Ascending aorta (tissue), 2 donors: ENCODE measurements at regions of chr6 and their contacts with region 1.

Region 1: DNA sequence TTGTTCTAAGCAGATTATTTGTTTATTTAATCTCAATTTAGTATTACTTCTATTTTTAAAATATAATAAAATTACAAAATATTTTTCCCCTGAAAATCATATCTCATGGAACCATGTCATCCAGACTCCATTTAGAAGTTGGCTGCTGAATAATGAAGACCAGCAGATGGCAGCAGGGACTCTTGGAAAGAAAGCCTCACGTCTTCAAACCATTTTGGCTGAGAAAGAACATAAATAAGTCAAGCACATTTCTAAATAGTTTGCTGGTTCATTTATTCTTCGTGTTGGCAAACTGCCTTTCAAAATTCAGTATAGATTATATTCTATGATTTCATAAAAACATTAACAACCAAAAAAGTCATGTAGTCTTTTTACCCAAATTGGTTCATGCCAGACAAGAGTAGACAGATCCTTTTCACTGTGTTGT is 71.7 kb downstream of the RCAN2 start:
- DNase-seq: peak in 1 of 2 donors; percentile 81
- H3K4me3 ChIP-seq: no peak overlapping the region
- H3K27ac ChIP-seq: peak overlapping the region; percentile 68 to 72
- H3K4me1 ChIP-seq: peaks cover 17 to 32% of the 10 kb centered on the region in 2 donors
- H3K27me3 ChIP-seq: no peaks in the 10 kb centered on the region
- CTCF ChIP-seq: peak; percentile 69 to 86 (median 85)

Region 2: DNA sequence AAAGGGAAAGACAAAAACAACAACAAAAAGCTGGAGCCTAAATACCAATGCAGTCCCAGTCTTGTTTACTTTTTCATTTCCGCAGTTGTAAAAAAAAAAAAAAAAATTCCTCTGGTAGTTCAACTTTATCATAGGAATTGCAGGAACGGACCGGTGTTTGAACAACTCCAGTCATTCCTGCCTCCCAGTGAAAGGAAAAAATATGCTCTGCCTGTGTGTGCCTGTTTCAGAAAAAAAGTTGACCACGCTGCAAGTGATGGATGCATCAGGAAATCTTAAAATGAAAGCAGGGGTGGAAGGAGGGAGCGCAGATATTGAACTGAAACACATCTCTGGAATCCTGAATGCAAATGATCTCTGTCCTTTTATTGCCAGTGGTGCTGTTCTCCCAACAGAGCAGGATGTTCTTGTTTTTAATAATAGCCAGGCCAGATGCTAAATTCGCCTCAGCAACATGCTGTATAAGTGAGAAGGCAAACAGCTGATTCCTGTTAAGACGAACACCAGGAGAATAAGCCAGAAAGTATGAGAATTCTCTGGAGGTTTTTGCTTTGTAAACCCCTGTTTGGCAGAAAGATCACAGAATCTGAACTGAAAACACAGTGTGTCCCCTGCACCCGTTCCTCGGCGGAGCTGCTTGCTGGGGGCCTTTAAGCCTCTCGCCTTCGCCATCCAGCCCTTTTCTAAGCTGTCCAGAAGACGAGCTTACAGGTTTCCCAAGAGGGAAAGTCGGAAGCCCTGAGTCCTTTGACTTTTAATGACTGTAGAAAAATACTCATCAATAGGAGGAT is 863.4 kb before region 1 on chr6:
- intact Hi-C with region 1: no loop called
- DNase-seq: no peak
- H3K4me3 ChIP-seq: peak overlapping the region in 1 of 2 donors; percentile 36
- H3K27ac ChIP-seq: no peak overlapping the region
- H3K4me1 ChIP-seq: no peaks in the 10 kb centered on the region
- H3K27me3 ChIP-seq: no peaks in the 10 kb centered on the region
- CTCF ChIP-seq: no peak

Region 3: DNA sequence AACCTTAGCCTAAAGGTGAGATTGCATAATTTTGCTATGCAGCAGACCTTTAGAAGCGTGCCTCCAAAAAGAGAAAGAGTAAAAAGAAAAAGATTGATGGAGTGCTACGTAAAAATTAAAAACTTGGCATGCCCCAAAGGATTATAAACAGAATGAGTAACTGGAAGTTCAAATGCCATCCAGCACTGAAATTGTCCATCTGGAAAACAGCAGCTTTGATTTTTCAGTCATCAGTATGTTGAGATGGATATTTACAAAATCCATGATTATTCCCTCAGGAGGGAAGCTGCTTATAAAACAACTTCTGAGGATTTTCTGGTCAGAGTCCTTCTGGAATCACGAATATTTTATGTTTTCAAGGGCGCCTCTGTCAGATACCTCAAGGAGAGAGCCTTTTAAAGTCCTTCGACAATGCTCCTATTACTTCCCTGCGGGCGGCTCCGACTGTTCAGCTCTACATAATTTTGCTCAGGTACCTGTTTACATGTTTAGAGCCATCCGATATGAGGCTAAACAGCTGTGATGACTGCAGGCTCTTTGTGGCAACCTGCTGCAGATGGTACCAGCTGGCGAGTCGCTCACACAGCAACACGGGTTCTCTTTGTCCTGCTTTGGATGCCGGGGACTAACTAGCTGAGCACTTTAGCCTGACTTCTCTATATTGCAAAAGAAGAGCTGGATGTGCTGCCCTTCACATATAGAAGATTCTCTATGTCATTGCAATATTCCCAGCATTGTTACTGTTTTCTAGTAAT is 11.6 kb before region 1 on chr6:
- intact Hi-C with region 1: no loop called
- DNase-seq: no peak
- H3K4me3 ChIP-seq: no peak overlapping the region
- H3K27ac ChIP-seq: peak overlapping the region in 1 of 2 donors; percentile 28
- H3K4me1 ChIP-seq: peaks cover 6 to 53% of the 10 kb centered on the region in 2 donors
- H3K27me3 ChIP-seq: no peaks in the 10 kb centered on the region
- CTCF ChIP-seq: no peak

Region 4: DNA sequence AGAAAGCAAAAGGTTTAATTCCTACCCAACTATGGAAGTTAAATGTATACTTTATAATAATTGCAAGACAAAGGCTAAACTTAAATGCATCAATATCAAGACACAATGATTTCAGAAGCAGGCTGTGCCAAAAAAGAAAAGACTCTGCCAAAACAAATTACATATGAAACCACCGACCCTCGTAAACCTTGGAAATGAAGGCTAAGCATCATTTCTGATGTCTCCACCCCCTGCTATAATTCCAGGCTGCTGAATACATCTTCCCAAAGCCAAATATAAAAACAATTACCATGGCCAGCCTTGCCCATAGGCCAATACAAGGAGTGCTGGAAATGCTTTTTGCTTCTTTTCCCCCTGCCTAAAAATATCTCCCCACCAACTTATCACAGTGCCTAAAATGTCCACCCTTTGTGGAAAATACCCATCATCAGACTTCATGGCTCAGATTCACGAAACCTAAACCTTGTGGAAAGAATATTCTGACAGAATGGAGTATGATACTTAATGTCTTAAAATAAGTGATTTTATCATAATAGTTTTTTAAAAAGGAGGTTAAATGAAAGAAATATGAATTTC is 34.2 kb after region 1 on chr6:
- intact Hi-C with region 1: loop called (anchors 5 kb)
- DNase-seq: no peak
- H3K4me3 ChIP-seq: peak overlapping the region in 1 of 2 donors; percentile 20
- H3K27ac ChIP-seq: peak overlapping the region; percentile 53 to 83
- H3K4me1 ChIP-seq: peaks cover 3 to 51% of the 10 kb centered on the region in 2 donors
- H3K27me3 ChIP-seq: no peaks in the 10 kb centered on the region
- CTCF ChIP-seq: no peak

Region 5: GRCh38 chr6:46626228-46626909 is 206.8 kb after region 1 on chr6:
- intact Hi-C with region 1: loop called (anchors 1 kb)
- DNase-seq: no peak
- H3K4me3 ChIP-seq: peak overlapping the region; percentile 5 to 53
- H3K27ac ChIP-seq: no peak overlapping the region
- H3K4me1 ChIP-seq: no peaks in the 10 kb centered on the region
- H3K27me3 ChIP-seq: no peaks in the 10 kb centered on the region
- CTCF ChIP-seq: peak; percentile 62 to 74 (median 63)